ENCODE measurements at regions of chrX and their contacts with region 1.

Region 1: GRCh38 chrX:101415180-101416145 is 7.4 kb downstream of the HNRNPH2 start:
- DNase-seq: no peak
- ATAC-seq: peak; percentile 54 to 61
- H3K4me3 ChIP-seq: no peak overlapping the region
- H3K27ac ChIP-seq: peak overlapping the region; percentile 70 to 78 (median 76)
- H3K4me1 ChIP-seq: peaks cover 11 to 27% of the 10 kb centered on the region in 2 donors
- H3K27me3 ChIP-seq: no peaks in the 10 kb centered on the region
- CTCF ChIP-seq: peak; percentile 24 to 83 (median 62)
- POLR2A ChIP-seq: no peak

Region 2: DNA sequence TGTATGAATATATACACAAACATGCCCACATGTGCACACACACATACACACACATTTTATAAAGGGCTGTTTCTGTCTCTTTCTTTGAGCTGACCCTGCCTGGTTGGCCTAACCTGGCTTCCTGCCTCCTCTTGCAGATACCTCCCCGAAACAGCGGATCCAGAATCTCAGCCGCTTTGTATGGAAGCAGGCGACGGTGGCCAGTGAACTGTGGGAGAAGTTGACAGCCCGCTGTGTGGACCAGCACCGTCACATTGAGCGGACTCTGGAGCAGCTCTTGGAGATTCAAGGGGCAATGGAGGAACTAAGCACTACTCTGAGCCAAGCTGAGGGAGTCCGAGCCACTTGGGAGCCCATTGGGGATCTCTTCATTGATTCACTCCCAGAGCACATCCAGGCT is 173.9 kb before region 1 on chrX:
- in situ Hi-C with region 1: no loop called
- intact Hi-C with region 1: no loop called
- DNase-seq: no peak
- ATAC-seq: no peak
- H3K4me3 ChIP-seq: no peak overlapping the region
- H3K27ac ChIP-seq: no peak overlapping the region
- H3K4me1 ChIP-seq: no peaks in the 10 kb centered on the region
- H3K27me3 ChIP-seq: no peaks in the 10 kb centered on the region
- CTCF ChIP-seq: no peak
- POLR2A ChIP-seq: no peak

Region 3: DNA sequence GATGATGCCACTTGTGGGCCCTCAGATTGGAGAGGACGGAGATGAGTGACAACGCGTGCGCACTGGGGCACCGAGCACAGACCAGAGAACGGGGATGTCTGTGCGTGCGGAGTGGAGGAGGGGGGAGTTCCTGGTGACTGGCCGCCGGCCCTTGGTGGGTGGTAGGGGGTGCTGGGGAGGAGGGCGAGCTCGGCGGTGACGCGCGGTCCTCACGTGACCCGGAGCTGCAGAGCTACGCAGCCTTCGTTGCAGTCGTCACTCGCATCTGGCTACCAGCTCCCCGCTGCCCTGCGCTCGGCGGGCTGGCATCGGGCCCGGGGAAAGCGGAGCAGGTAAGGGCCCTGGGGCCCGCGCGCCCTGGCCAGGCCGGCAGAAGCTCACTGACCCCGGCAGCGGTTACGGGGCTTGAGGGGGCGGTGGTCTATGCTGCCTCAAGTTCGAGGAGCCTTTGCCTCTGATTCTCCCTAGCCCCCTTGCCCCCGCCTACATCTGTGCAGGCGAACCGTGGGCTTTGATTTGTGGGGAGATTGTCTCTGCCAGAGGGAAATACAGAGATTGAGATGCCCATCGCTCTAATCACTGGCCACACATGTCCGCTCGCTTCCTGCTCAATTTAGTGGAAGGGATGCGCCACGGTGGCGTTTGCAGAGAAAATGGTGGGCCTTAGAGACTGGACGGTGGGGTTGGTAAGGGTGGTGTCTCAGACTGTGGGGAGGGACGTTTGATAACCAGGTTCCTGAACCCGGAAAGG is 69.9 kb after region 1 on chrX and contains the start of gene ARMCX4:
- in situ Hi-C with region 1: no loop called
- intact Hi-C with region 1: loop called (anchors 5 kb)
- DNase-seq: peak; percentile 4 to 51
- ATAC-seq: peak; percentile 63 to 78
- H3K4me3 ChIP-seq: peak within 1 kb of the TSS; percentile 46 to 55 (median 50)
- H3K27ac ChIP-seq: peak within 1 kb of the TSS in 3 of 4 donors; percentile 58 to 69 (median 67)
- H3K4me1 ChIP-seq: no peaks in the 10 kb centered on the region
- H3K27me3 ChIP-seq: no peaks in the 10 kb centered on the region
- CTCF ChIP-seq: no peak
- POLR2A ChIP-seq: no peak
- total RNA-seq, gene ARMCX4: 0.44 to 3.0 (median 1.1) TPM

Region 4: DNA sequence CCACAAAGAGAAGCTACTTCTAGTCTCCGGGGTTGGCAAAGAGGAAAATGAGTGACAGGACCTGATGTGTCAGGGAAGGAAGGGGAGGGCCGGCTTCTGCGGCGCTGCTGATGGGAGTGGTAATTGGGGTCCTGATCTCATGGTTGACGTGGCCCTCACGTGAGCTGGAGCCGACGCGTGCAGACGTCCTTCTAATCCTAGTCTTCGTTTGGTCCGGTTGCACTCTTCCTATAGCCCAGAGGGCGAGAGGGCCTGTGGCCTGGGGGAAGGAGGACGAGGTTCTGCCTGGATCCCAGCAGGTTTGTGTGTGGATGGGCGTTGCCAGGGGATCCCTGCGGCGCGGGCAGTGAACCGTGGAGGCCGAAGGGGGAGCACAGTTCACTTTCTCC is 134.9 kb after region 1 on chrX and contains the start of gene ARMCX1:
- in situ Hi-C with region 1: no loop called
- intact Hi-C with region 1: loop called (anchors 2 kb)
- DNase-seq: peak; percentile 43 to 68
- ATAC-seq: peak; percentile 91 to 93
- H3K4me3 ChIP-seq: peak within 1 kb of the TSS; percentile 59 to 79 (median 64)
- H3K27ac ChIP-seq: peak within 1 kb of the TSS; percentile 77 to 87 (median 86)
- H3K4me1 ChIP-seq: no peaks in the 10 kb centered on the region
- H3K27me3 ChIP-seq: no peaks in the 10 kb centered on the region
- CTCF ChIP-seq: no peak
- POLR2A ChIP-seq: peak; percentile 60 to 75
- total RNA-seq, gene ARMCX1: 8.3 to 16.6 (median 12.8) TPM

Region 5: DNA sequence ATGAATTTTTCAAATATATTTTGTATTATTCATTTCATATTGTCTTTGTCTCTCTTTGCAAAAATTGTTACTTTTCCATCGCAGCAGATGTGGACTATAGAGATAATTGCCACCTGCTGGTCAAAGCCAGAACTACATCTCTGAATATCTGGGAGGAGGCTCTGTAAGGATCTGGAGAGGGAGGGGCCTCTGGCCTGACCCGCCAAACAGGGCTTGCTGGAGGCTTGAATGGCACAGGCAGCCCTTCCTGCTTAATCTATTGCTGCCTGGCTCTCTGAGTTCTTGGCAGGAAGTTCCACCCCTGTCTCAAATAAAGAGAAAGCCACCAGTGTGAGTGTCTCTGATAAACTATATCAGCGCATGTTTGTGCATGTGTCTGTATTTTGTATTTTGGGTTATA is 383.9 kb after region 1 on chrX:
- in situ Hi-C with region 1: loop called in 2 of 4 experiments (anchors 10 to 25 kb)
- intact Hi-C with region 1: loop called (anchors 1 kb)
- DNase-seq: peak; percentile 37 to 54
- ATAC-seq: peak; percentile 65 to 84
- H3K4me3 ChIP-seq: no peak overlapping the region
- H3K27ac ChIP-seq: no peak overlapping the region
- H3K4me1 ChIP-seq: no peaks in the 10 kb centered on the region
- H3K27me3 ChIP-seq: no peaks in the 10 kb centered on the region
- CTCF ChIP-seq: peak; percentile 39 to 69 (median 61)
- POLR2A ChIP-seq: no peak

Region 6: GRCh38 chrX:101931488-101932248 is 516.2 kb after region 1 on chrX and contains the start of gene ZMAT1:
- in situ Hi-C with region 1: loop called in 1 of 4 experiments (anchors 25 kb)
- intact Hi-C with region 1: loop called (anchors 10 kb)
- DNase-seq: peak; percentile 86 to 95
- ATAC-seq: peak; percentile 98 to 99
- H3K4me3 ChIP-seq: peak within 1 kb of the TSS; percentile 65 to 79 (median 71)
- H3K27ac ChIP-seq: peak within 1 kb of the TSS; percentile 87 to 98 (median 94)
- H3K4me1 ChIP-seq: no peaks in the 10 kb centered on the region
- H3K27me3 ChIP-seq: no peaks in the 10 kb centered on the region
- CTCF ChIP-seq: no peak
- POLR2A ChIP-seq: peak; percentile 86 to 90
- total RNA-seq, gene ZMAT1: 0.68 to 2.7 (median 1.2) TPM